ENCODE measurements at regions of chr9 and their contacts with region 1.

Region 1: GRCh38 chr9:111483862-111484571 is at the start of gene ECPAS:
- DNase-seq: peak; percentile 35 to 79 (median 63)
- ATAC-seq: peak; percentile 64
- H3K4me3 ChIP-seq: peak within 1 kb of the TSS; percentile 90 to 99
- H3K4me3 Mint-ChIP-seq: peak within 1 kb of the TSS; percentile 86
- H3K27ac ChIP-seq: peak within 1 kb of the TSS; percentile 81 to 85
- H3K27ac Mint-ChIP-seq: peak within 1 kb of the TSS; percentile 81
- H3K4me1 ChIP-seq: peaks cover 7% of the 10 kb centered on the region
- H3K4me1 Mint-ChIP-seq: peaks cover 29% of the 10 kb centered on the region
- H3K27me3 ChIP-seq: no peaks in the 10 kb centered on the region
- H3K27me3 Mint-ChIP-seq: no peaks in the 10 kb centered on the region
- CTCF ChIP-seq: no peak
- total RNA-seq, gene ECPAS: 36.4 to 44.6 TPM

Region 2: GRCh38 chr9:111525056-111525977 is 41.3 kb after region 1 on chr9 and contains the start of gene ZNF483:
- CTCF ChIA-PET with region 1: no interaction called
- POLR2A ChIA-PET with region 1: interaction called, 13 read pairs
- intact Hi-C with region 1: loop called (anchors 2 kb)
- DNase-seq: peak; percentile 55 to 92 (median 76)
- ATAC-seq: peak; percentile 92
- H3K4me3 ChIP-seq: peak within 1 kb of the TSS; percentile 77
- H3K4me3 Mint-ChIP-seq: peak within 1 kb of the TSS; percentile 98
- H3K27ac ChIP-seq: peak within 1 kb of the TSS; percentile 70 to 88
- H3K27ac Mint-ChIP-seq: peak within 1 kb of the TSS; percentile 100
- H3K4me1 ChIP-seq: peaks cover 6% of the 10 kb centered on the region
- H3K4me1 Mint-ChIP-seq: peaks cover 28% of the 10 kb centered on the region
- H3K27me3 ChIP-seq: peaks cover 0 to 3% of the 10 kb centered on the region in 2 experiments
- H3K27me3 Mint-ChIP-seq: peaks cover 2% of the 10 kb centered on the region
- CTCF ChIP-seq: no peak
- total RNA-seq, gene ZNF483: 19.6 to 21.3 TPM

Region 3: GRCh38 chr9:111661150-111661801 is 177.3 kb after region 1 on chr9 and contains the start of gene GNG10:
- CTCF ChIA-PET with region 1: no interaction called
- POLR2A ChIA-PET with region 1: no interaction called
- intact Hi-C with region 1: loop called in 1 of 2 experiments (anchors 10 kb)
- DNase-seq: peak; percentile 48 to 82 (median 66)
- ATAC-seq: peak; percentile 95
- H3K4me3 ChIP-seq: peak within 1 kb of the TSS; percentile 70 to 95
- H3K4me3 Mint-ChIP-seq: peak within 1 kb of the TSS; percentile 95
- H3K27ac ChIP-seq: peak within 1 kb of the TSS; percentile 55 to 57
- H3K27ac Mint-ChIP-seq: peak within 1 kb of the TSS; percentile 92
- H3K4me1 ChIP-seq: peaks cover 24% of the 10 kb centered on the region
- H3K4me1 Mint-ChIP-seq: peaks cover 40% of the 10 kb centered on the region
- H3K27me3 ChIP-seq: no peaks in the 10 kb centered on the region
- H3K27me3 Mint-ChIP-seq: no peaks in the 10 kb centered on the region
- CTCF ChIP-seq: no peak
- total RNA-seq, gene GNG10: 1.6 to 2.6 TPM

Region 4: GRCh38 chr9:112086627-112087026 is 602.6 kb after region 1 on chr9:
- CTCF ChIA-PET with region 1: no interaction called
- POLR2A ChIA-PET with region 1: no interaction called
- intact Hi-C with region 1: loop called in 1 of 2 experiments (anchors 5 kb)
- DNase-seq: peak in 2 of 9 experiments; percentile 31 to 42
- ATAC-seq: no peak
- H3K4me3 ChIP-seq: no peak overlapping the region
- H3K4me3 Mint-ChIP-seq: no peak overlapping the region
- H3K27ac ChIP-seq: no peak overlapping the region
- H3K27ac Mint-ChIP-seq: no peak overlapping the region
- H3K4me1 ChIP-seq: no peaks in the 10 kb centered on the region
- H3K4me1 Mint-ChIP-seq: no peaks in the 10 kb centered on the region
- H3K27me3 ChIP-seq: no peaks in the 10 kb centered on the region
- H3K27me3 Mint-ChIP-seq: no peaks in the 10 kb centered on the region
- CTCF ChIP-seq: peak; percentile 55

Region 5: DNA sequence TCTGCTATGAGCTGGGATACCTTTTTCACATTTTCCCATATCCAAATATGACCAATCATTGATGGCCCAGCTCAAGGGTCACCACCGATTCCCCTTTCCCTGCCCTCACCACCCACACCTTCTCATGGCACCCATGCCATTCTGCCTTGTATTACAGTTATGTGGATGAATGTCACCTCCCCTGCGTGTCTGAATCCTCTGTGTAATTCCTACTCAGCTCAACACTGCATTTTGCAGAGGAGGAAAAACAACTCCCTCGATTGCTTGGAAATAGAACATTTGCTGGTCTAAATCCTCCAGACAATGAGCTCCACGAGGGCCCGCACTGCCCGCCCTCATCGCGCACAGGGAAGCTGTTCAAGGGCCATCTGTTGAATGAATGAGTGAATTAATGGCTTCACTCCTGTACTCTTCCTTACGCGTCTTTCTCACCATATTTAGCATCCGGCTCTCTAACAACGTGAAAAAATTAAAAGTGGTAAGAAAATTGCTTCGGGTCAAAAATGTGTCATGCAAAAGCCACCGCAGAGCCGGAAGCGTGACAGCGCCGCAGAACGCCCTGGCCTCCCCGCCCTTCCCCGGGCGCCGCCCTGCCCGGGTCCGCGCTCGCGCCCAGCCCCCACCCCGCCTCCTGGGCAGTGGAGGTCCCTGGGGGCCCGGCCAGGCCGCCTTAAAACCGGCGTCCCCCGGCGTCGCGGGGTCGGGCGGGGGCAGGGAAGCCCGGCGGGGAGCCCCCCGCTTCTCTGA is 690.4 kb after region 1 on chr9:
- CTCF ChIA-PET with region 1: no interaction called
- POLR2A ChIA-PET with region 1: no interaction called
- intact Hi-C with region 1: loop called in 1 of 2 experiments (anchors 10 kb)
- DNase-seq: peak; percentile 45 to 87 (median 74)
- ATAC-seq: peak; percentile 70
- H3K4me3 ChIP-seq: peak overlapping the region; percentile 43 to 73
- H3K4me3 Mint-ChIP-seq: peak overlapping the region; percentile 91
- H3K27ac ChIP-seq: peak overlapping the region; percentile 35 to 56
- H3K27ac Mint-ChIP-seq: peak overlapping the region; percentile 87
- H3K4me1 ChIP-seq: peaks cover 46% of the 10 kb centered on the region
- H3K4me1 Mint-ChIP-seq: peaks cover 73% of the 10 kb centered on the region
- H3K27me3 ChIP-seq: no peaks in the 10 kb centered on the region
- H3K27me3 Mint-ChIP-seq: no peaks in the 10 kb centered on the region
- CTCF ChIP-seq: no peak

Region 6: GRCh38 chr9:112379177-112380101 is 895.4 kb after region 1 on chr9:
- CTCF ChIA-PET with region 1: no interaction called
- POLR2A ChIA-PET with region 1: no interaction called
- intact Hi-C with region 1: loop called (anchors 2 to 5 kb)
- DNase-seq: peak; percentile 93 to 99 (median 97)
- ATAC-seq: peak; percentile 95
- H3K4me3 ChIP-seq: peak overlapping the region; percentile 81 to 96
- H3K4me3 Mint-ChIP-seq: peak overlapping the region; percentile 99
- H3K27ac ChIP-seq: peak overlapping the region; percentile 77 to 92
- H3K27ac Mint-ChIP-seq: peak overlapping the region; percentile 96
- H3K4me1 ChIP-seq: peaks cover 27% of the 10 kb centered on the region
- H3K4me1 Mint-ChIP-seq: peaks cover 54% of the 10 kb centered on the region
- H3K27me3 ChIP-seq: no peaks in the 10 kb centered on the region
- H3K27me3 Mint-ChIP-seq: no peaks in the 10 kb centered on the region
- CTCF ChIP-seq: no peak

Region 7: GRCh38 chr9:112486221-112487007 is 1002.4 kb after region 1 on chr9 and contains the start of gene KIAA1958:
- CTCF ChIA-PET with region 1: no interaction called
- POLR2A ChIA-PET with region 1: no interaction called
- intact Hi-C with region 1: loop called in 1 of 2 experiments (anchors 5 kb)
- DNase-seq: peak; percentile 50 to 91 (median 81)
- ATAC-seq: peak; percentile 74
- H3K4me3 ChIP-seq: peak within 1 kb of the TSS; percentile 77 to 81
- H3K4me3 Mint-ChIP-seq: peak within 1 kb of the TSS; percentile 97
- H3K27ac ChIP-seq: peak within 1 kb of the TSS; percentile 77 to 78
- H3K27ac Mint-ChIP-seq: peak within 1 kb of the TSS; percentile 94
- H3K4me1 ChIP-seq: peaks cover 12% of the 10 kb centered on the region
- H3K4me1 Mint-ChIP-seq: peaks cover 42% of the 10 kb centered on the region
- H3K27me3 ChIP-seq: no peaks in the 10 kb centered on the region
- H3K27me3 Mint-ChIP-seq: no peaks in the 10 kb centered on the region
- CTCF ChIP-seq: no peak
- total RNA-seq, gene KIAA1958: 7.2 to 7.5 TPM